Caco-2 (cell line): ENCODE measurements at regions of chr3 and their contacts with region 1.

Region 1: GRCh38 chr3:174397848-174398247 is 461.3 kb upstream of the NAALADL2 start:
- DNase-seq: peak in 1 of 2 experiments; percentile 39
- H3K4me3 ChIP-seq: no peak overlapping the region
- H3K4me3 Mint-ChIP-seq: no peak overlapping the region
- H3K27ac Mint-ChIP-seq: no peak overlapping the region
- H3K4me1 ChIP-seq: no peaks in the 10 kb centered on the region
- H3K4me1 Mint-ChIP-seq: no peaks in the 10 kb centered on the region
- H3K27me3 ChIP-seq: no peaks in the 10 kb centered on the region
- H3K27me3 Mint-ChIP-seq: no peaks in the 10 kb centered on the region
- CTCF ChIP-seq: peak; percentile 16 to 45

Region 2: DNA sequence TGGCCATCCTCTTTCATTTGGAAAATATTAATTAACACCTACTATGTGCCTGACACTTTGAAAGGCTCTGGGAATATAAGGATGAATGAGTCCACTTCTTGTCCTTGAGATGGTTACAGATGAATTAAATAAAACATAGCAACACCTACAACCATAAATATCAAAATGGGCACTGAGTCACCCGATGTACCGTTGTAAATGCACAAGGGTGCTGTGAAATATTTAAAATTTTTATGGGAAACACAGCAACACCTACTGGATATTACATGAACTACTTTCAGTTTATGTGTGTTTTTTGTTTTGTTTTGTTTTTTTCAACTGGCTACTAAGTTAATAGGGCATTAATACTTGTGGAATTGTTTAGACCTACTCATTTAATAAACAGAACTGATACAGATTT is 222.3 kb after region 1 on chr3:
- CTCF ChIA-PET with region 1: no interaction called
- POLR2A ChIA-PET with region 1: no interaction called
- intact Hi-C with region 1: loop called (anchors 1 kb)
- DNase-seq: no peak
- H3K4me3 ChIP-seq: no peak overlapping the region
- H3K4me3 Mint-ChIP-seq: no peak overlapping the region
- H3K27ac Mint-ChIP-seq: no peak overlapping the region
- H3K4me1 ChIP-seq: no peaks in the 10 kb centered on the region; the same call in 1 of the 2 replicates
- H3K4me1 Mint-ChIP-seq: no peaks in the 10 kb centered on the region
- H3K27me3 ChIP-seq: no peaks in the 10 kb centered on the region
- H3K27me3 Mint-ChIP-seq: no peaks in the 10 kb centered on the region
- CTCF ChIP-seq: no peak

Region 3: DNA sequence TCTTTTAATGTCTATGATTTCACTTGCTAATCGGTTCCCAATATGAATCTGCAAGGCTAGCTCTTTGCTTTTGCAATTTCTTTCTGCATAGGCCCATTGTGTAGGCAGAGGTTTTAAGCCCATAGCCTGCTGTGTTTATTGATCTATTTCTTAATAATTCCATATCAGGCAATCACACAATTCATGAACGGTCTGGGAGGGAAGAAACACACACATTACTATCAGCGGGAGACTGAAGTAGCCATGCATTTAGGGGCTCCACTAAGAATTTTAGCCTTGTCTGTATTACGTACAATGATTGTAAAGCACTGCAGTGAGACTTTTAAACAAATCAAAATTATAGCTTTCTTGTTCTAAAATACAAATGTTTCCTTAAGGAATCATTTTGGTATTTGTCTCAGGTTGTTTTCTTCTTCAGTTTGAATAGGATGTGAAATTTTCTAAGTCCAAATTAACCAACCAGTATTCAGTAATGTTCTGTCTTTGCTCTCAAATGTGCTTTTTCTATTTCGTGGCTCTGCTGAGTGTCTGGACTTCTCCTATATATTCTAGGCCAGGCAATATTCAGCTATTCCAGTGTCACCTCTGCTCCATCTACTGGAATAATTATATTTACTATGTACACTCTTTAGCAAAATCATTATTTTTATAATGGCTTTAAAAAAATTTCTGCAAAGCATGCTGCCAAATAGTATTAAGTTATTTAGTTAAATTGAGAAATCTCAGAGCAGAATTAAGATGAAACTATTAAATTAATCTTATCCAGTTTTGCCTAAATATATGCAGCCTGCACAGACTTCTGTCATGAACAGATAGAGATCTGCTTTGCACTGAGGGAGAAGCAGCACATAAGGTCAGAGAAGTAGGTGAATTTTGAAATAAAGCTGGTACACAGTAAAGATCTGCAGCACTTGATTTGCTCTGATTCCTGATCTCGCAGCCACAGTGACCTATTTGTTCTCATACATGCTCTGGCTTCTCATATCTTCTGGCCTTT is 358.3 kb after region 1 on chr3:
- CTCF ChIA-PET with region 1: no interaction called
- POLR2A ChIA-PET with region 1: no interaction called
- intact Hi-C with region 1: loop called (anchors 5 kb)
- DNase-seq: no peak
- H3K4me3 ChIP-seq: no peak overlapping the region
- H3K4me3 Mint-ChIP-seq: no peak overlapping the region
- H3K27ac Mint-ChIP-seq: no peak overlapping the region
- H3K4me1 ChIP-seq: no peaks in the 10 kb centered on the region
- H3K4me1 Mint-ChIP-seq: no peaks in the 10 kb centered on the region
- H3K27me3 ChIP-seq: no peaks in the 10 kb centered on the region
- H3K27me3 Mint-ChIP-seq: no peaks in the 10 kb centered on the region
- CTCF ChIP-seq: no peak

Region 4: DNA sequence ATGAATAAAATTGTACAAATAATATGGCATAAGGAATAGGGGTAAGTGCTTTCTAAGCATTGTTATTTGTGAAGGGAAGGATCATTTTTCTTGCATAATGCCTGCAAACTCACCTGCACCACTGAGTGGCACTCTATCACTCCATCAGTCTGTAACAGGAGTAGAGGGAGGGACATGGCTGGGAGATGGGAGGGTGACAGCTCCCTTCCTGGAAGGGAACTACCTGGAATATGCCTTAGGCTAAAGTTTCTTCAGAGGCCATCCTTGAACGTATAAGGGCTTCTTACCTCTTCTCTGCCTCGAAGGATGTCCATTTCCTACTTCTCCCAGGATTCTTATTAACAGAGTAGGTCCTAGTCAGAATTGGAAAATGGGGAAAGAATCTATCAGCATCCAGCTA is 464.3 kb after region 1 on chr3:
- CTCF ChIA-PET with region 1: no interaction called
- POLR2A ChIA-PET with region 1: no interaction called
- intact Hi-C with region 1: loop called (anchors 2 kb)
- DNase-seq: peak; percentile 58 to 60
- H3K4me3 ChIP-seq: no peak overlapping the region
- H3K4me3 Mint-ChIP-seq: no peak overlapping the region
- H3K27ac Mint-ChIP-seq: no peak overlapping the region
- H3K4me1 ChIP-seq: peaks cover 41% of the 10 kb centered on the region
- H3K4me1 Mint-ChIP-seq: peaks cover 14% of the 10 kb centered on the region
- H3K27me3 ChIP-seq: no peaks in the 10 kb centered on the region
- H3K27me3 Mint-ChIP-seq: no peaks in the 10 kb centered on the region
- CTCF ChIP-seq: peak; percentile 17 to 47

Region 5: DNA sequence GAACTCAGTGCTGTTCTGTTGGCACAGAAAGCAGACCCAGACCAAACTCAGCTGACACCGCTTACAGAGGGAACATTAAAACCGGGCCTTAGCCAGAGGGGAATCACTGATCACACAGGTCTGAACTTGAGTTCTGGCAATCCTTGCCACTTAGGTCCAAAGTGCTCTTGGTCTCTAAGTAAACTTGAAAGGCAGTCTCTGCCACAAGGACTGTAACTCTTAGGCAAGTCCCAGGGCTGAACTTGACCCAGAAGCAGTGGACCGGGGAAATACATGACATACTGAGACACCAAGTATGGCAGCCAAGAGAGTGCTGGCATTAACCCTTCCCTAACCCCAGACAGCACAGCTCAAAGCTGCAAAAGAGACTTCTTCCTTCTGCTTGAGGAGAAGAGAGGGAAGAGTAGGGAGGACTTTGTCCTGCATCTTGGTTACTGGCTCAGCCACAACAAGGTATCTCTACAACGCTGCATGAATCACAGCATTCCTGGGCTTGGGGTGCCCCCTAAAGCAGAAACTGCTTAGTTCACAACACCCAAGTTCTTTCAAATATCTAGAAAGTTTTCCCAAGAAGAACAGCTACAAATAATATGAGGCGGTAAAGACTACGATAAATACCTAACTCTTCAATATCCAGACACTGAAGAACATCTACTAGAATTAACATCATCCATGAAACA is 493.8 kb after region 1 on chr3:
- CTCF ChIA-PET with region 1: no interaction called
- POLR2A ChIA-PET with region 1: no interaction called
- intact Hi-C with region 1: loop called (anchors 1 kb)
- DNase-seq: peak in 1 of 2 experiments; percentile 21
- H3K4me3 ChIP-seq: no peak overlapping the region
- H3K4me3 Mint-ChIP-seq: no peak overlapping the region
- H3K27ac Mint-ChIP-seq: no peak overlapping the region
- H3K4me1 ChIP-seq: no peaks in the 10 kb centered on the region
- H3K4me1 Mint-ChIP-seq: no peaks in the 10 kb centered on the region
- H3K27me3 ChIP-seq: no peaks in the 10 kb centered on the region
- H3K27me3 Mint-ChIP-seq: no peaks in the 10 kb centered on the region
- CTCF ChIP-seq: no peak

Region 6: DNA sequence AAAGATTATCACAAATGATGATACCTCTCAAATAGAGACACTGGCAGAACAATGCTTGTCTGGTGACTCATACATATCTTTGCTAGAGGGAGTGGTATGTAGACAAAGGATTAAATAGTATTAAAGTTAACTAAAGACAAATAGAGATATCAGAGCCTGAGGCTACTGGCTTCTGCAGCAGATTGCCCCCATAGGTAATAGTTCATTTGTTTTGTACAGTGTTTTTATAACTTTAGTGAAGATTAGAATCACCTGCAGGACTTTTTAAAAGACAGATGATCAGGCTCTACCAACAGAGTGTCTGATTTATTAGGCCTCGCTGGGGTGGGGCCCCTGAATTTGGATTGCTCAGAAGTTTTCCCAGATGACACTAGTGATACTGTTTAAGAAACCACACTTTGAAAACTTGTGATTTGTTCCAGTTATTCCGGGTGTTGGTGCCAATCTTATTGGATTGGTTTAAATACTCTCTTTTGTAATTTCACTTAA is 557.7 kb after region 1 on chr3:
- CTCF ChIA-PET with region 1: no interaction called
- POLR2A ChIA-PET with region 1: no interaction called
- intact Hi-C with region 1: loop called (anchors 1 kb)
- DNase-seq: peak; percentile 65 to 73
- H3K4me3 ChIP-seq: no peak overlapping the region
- H3K4me3 Mint-ChIP-seq: no peak overlapping the region
- H3K27ac Mint-ChIP-seq: peak overlapping the region; percentile 70
- H3K4me1 ChIP-seq: peaks cover 19% of the 10 kb centered on the region
- H3K4me1 Mint-ChIP-seq: peaks cover 30% of the 10 kb centered on the region
- H3K27me3 ChIP-seq: no peaks in the 10 kb centered on the region
- H3K27me3 Mint-ChIP-seq: no peaks in the 10 kb centered on the region
- CTCF ChIP-seq: no peak

Region 7: GRCh38 chr3:175121225-175121624 is 723.4 kb after region 1 on chr3:
- CTCF ChIA-PET with region 1: no interaction called
- POLR2A ChIA-PET with region 1: no interaction called
- intact Hi-C with region 1: loop called (anchors 1 kb)
- DNase-seq: peak; percentile 31 to 47
- H3K4me3 ChIP-seq: no peak overlapping the region
- H3K4me3 Mint-ChIP-seq: no peak overlapping the region
- H3K27ac Mint-ChIP-seq: no peak overlapping the region
- H3K4me1 ChIP-seq: no peaks in the 10 kb centered on the region
- H3K4me1 Mint-ChIP-seq: no peaks in the 10 kb centered on the region
- H3K27me3 ChIP-seq: no peaks in the 10 kb centered on the region
- H3K27me3 Mint-ChIP-seq: no peaks in the 10 kb centered on the region
- CTCF ChIP-seq: peak; percentile 27 to 66